Head of caudate nucleus (tissue), 42 donors: ENCODE measurements at regions of chr6 and their contacts with region 1.

Region 1: DNA sequence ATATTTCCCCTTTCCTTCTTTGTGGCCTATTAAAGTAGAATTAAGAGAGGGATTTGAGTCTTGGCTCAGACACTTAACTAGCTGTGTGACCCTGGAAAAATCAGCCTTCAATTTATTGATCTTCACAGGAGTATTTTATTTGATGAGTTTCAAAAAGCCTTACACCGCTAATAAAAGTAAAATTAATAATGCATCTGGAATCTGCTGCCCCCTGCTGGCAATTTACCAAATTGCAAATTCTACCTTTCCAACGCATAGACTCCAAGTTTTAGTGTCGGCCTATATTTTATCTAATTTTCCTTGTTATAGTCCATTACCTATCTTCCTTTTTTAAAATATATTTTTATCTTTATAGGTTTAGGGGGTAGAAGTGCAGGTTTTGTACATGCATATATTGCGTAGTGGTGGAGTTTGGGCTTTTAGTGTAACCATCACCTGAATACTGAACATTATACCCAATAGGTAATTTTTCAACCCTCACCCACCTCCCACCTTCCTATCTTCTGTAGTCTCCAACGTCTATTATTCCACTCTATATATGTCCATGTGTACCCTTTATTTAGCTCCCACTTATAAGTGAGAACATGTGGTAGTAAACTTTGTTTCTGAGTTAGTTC is 46.3 kb downstream of the GOPC start:
- DNase-seq: peak in 34 of 42 donors; percentile 29 to 89 (median 66)

Region 2: GRCh38 chr6:117449549-117450439 is 106.2 kb before region 1 on chr6:
- intact Hi-C with region 1: loop called (anchors 5 kb)
- DNase-seq: peak in 35 of 42 donors; percentile 6 to 82 (median 44)

Region 3: DNA sequence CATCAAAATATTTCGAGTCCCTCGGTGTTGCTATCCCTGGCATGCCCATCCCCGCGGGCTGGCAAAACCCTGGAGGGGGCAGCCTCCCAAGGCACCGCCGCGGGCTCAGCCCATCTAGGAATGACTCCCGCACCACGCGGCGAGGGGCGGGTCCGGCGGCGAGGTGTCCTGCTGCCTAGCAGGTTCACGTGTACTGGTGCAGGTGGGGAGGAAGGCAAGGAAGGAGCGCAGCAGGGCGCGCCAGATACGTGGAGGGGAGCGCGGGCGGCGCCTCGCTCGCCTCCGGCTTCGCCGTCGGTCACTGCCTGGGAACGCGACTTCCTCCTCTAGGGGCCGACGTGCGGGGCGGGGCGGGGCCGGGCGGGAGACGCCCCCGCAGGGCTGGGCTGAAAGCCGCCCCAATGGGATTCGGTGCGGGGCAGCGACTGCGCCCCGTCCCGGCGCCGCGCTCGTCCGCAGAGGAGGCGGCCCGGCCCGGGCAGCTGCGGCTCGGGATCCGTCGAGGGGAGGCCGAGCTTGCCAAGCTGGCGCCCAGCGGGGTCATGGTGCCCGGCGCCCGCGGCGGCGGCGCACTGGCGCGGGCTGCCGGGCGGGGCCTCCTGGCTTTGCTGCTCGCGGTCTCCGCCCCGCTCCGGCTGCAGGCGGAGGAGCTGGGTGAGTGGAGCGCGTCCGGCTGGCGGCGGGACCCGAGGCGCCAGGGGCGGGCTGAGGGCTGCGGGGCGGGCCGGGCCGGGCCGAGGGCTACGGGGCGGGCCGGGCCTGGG is 73.6 kb before region 1 on chr6 and contains the start of gene DCBLD1:
- intact Hi-C with region 1: loop called (anchors 10 kb)
- DNase-seq: peak in 41 of 42 donors; percentile 18 to 82 (median 60)

Region 4: GRCh38 chr6:117602151-117602898 is 46.3 kb after region 1 on chr6 and contains the start of gene GOPC:
- intact Hi-C with region 1: loop called (anchors 10 kb)
- DNase-seq: peak; percentile 92 to 98 (median 96)